Thyroid gland (tissue), 4 donors: ENCODE measurements at regions of chr12 and their contacts with region 1.

Region 1: GRCh38 chr12:2494486-2495192 is 300.1 kb upstream of the FKBP4 start:
- DNase-seq: peak in 1 of 2 donors; percentile 25
- H3K4me3 ChIP-seq: no peak overlapping the region
- H3K27ac ChIP-seq: peak overlapping the region; percentile 35 to 62 (median 55)
- H3K4me1 ChIP-seq: peaks cover 10 to 37% of the 10 kb centered on the region in 2 donors
- H3K27me3 ChIP-seq: no peaks in the 10 kb centered on the region
- CTCF ChIP-seq: no peak
- POLR2A ChIP-seq: no peak

Region 2: DNA sequence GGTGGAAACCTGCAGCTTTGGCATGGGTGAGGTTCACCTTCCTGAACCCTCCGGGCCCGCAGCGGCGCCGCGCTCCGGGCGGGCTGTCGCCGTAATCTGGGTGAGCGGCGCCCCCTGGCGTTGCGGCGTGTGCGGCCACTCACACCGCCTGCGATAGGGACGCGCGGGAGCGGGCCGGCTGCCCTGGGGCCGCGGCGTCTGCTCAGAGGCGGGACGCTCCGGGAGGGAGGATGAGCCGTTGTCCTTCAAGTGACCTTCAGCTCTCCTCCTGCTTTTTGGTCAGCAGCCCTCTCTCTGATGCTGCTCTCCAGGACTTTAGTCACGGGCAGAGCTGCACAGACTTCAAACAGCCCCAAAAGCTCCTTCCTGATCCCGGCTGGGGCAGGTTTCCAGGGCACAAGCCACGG is 88.5 kb after region 1 on chr12:
- intact Hi-C with region 1: loop called (anchors 10 kb)
- DNase-seq: peak; percentile 66 to 69
- H3K4me3 ChIP-seq: no peak overlapping the region
- H3K27ac ChIP-seq: no peak overlapping the region
- H3K4me1 ChIP-seq: peaks cover 15 to 24% of the 10 kb centered on the region in 2 donors
- H3K27me3 ChIP-seq: no peaks in the 10 kb centered on the region
- CTCF ChIP-seq: peak; percentile 50 to 97 (median 94)
- POLR2A ChIP-seq: no peak